ENCODE measurements at regions of chr6 and their contacts with region 1.

Region 1: DNA sequence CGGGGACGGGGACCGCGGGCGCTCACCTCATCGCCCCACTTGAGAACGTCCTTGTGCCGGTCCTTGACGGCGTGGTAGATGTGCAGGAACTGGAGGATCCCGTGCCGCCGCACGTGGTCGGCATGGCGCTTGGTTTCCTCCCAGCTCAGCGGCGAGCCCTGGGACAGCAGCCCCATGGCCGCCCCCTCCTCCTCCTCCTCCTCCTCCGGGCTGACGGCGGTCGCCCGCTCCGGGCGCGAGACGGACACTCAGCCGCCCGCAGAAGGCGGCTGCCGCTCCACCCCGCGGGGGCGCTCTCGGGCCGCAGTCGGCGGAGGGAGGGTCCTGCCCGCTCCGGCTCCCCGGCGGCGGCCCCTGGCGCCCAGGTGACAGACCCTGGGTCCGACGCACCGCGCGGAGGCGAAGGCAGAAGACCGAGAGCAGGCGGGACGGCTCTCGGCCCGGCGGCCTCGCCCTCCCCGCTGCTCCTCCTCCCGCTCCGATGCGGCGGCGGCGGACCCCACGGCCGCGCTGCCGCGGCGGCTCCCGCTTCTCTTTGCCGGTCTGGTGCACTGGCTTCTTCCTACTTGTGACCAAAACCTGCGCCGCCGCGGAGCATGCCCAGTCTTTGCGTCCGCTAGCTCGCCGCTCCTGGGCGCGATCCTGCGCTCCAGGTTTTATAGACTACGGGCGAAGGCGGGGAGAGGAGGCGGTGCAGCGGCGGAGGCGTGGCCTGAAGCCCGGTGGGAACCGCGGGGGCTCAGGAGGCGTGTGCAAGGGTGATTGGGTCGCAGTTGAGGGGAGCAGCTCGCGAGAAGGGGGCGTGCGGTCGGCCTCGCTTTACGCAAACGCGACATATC is at the start of gene GCLC:
- DNase-seq: peak; percentile 94
- ATAC-seq: peak; percentile 68
- H3K4me3 Mint-ChIP-seq: peak within 1 kb of the TSS; percentile 96
- H3K27ac Mint-ChIP-seq: peak within 1 kb of the TSS; percentile 94
- H3K4me1 Mint-ChIP-seq: peaks cover 58% of the 10 kb centered on the region
- H3K27me3 Mint-ChIP-seq: peaks cover 6% of the 10 kb centered on the region
- total RNA-seq, gene GCLC: 18.2 to 23.5 TPM

Region 2: DNA sequence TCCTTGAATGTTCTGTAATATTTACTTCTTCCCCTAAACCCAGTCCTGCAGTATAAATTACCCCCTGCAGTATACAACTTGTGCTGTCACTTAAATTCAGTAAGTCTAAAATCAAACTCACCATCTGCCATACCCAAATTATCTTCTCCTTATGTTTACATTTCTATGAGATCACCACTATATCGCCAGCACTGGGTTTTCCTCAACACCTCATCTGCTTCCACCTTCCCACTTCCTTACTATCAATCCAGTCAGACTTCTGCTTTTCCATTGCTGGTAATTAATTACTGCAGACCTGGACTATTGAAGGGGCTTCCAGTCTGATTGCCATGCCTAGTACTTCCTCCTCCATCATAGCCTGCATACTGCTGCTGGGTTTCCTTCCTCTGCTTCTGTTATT is 1109.3 kb before region 1 on chr6:
- CTCF ChIA-PET with region 1: no interaction called
- POLR2A ChIA-PET with region 1: no interaction called
- intact Hi-C with region 1: no loop called
- DNase-seq: no peak
- ATAC-seq: no peak
- H3K4me3 Mint-ChIP-seq: no peak overlapping the region
- H3K27ac Mint-ChIP-seq: no peak overlapping the region
- H3K4me1 Mint-ChIP-seq: peaks cover 4% of the 10 kb centered on the region
- H3K27me3 Mint-ChIP-seq: no peaks in the 10 kb centered on the region

Region 3: GRCh38 chr6:52577022-52577777 is 967.5 kb before region 1 on chr6 and contains the start of gene TRAM2:
- CTCF ChIA-PET with region 1: no interaction called
- POLR2A ChIA-PET with region 1: no interaction called
- intact Hi-C with region 1: loop called in 1 of 2 experiments (anchors 10 kb)
- DNase-seq: peak; percentile 78
- ATAC-seq: peak; percentile 56
- H3K4me3 Mint-ChIP-seq: peak within 1 kb of the TSS; percentile 79
- H3K27ac Mint-ChIP-seq: peak within 1 kb of the TSS; percentile 80
- H3K4me1 Mint-ChIP-seq: peaks cover 43% of the 10 kb centered on the region
- H3K27me3 Mint-ChIP-seq: peaks cover 2% of the 10 kb centered on the region
- total RNA-seq, gene TRAM2: 3.5 to 3.6 TPM

Region 4: GRCh38 chr6:53064726-53065215 is 479.9 kb before region 1 on chr6:
- CTCF ChIA-PET with region 1: no interaction called
- POLR2A ChIA-PET with region 1: no interaction called
- intact Hi-C with region 1: loop called (anchors 2 kb)
- DNase-seq: peak; percentile 98
- ATAC-seq: peak; percentile 84
- H3K4me3 Mint-ChIP-seq: peak overlapping the region; percentile 97
- H3K27ac Mint-ChIP-seq: peak overlapping the region; percentile 100
- H3K4me1 Mint-ChIP-seq: peaks cover 55% of the 10 kb centered on the region
- H3K27me3 Mint-ChIP-seq: no peaks in the 10 kb centered on the region

Region 5: GRCh38 chr6:53095716-53096115 is 449.0 kb before region 1 on chr6:
- CTCF ChIA-PET with region 1: no interaction called
- POLR2A ChIA-PET with region 1: no interaction called
- intact Hi-C with region 1: no loop called
- DNase-seq: no peak
- ATAC-seq: no peak
- H3K4me3 Mint-ChIP-seq: no peak overlapping the region
- H3K27ac Mint-ChIP-seq: no peak overlapping the region
- H3K4me1 Mint-ChIP-seq: no peaks in the 10 kb centered on the region
- H3K27me3 Mint-ChIP-seq: no peaks in the 10 kb centered on the region

Region 6: GRCh38 chr6:53348371-53349208 is 196.1 kb before region 1 on chr6 and contains the start of gene ELOVL5:
- CTCF ChIA-PET with region 1: no interaction called
- POLR2A ChIA-PET with region 1: interaction called, 3 read pairs
- intact Hi-C with region 1: loop called (anchors 5 to 10 kb)
- DNase-seq: peak; percentile 99
- ATAC-seq: peak; percentile 79
- H3K4me3 Mint-ChIP-seq: peak within 1 kb of the TSS; percentile 93
- H3K27ac Mint-ChIP-seq: peak within 1 kb of the TSS; percentile 91
- H3K4me1 Mint-ChIP-seq: peaks cover 46% of the 10 kb centered on the region
- H3K27me3 Mint-ChIP-seq: no peaks in the 10 kb centered on the region
- total RNA-seq, gene ELOVL5: 98.1 to 106 TPM

Region 7: DNA sequence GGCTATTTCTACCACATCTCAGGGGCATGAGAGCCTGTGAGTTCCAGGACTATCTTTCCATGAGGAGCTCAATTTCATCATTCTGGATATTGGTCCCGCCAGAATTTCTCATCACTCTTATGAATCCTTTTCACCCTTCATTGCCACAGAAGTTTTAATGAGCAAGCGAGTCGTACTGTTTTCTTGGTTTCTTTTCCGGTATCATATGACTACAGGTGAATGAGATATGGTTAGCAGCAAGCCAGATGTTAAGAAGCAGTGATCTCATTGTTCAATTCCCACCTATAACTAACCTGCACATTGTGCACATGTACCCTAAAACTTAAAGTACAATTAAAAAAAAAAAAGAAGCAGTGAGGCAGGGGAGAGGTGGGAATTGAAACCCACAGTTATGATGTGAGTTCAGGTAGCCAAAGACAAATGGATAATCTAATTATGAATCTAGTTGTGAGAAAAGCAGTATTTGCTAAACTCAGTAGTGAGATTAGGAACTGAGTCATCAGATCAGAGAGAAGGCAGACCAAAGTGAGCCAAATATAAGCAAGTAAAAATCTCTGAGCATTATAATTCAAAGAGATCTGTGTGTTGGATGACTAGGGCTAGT is 117.9 kb before region 1 on chr6:
- CTCF ChIA-PET with region 1: no interaction called
- POLR2A ChIA-PET with region 1: no interaction called
- intact Hi-C with region 1: loop called in 1 of 2 experiments (anchors 5 kb)
- DNase-seq: no peak
- ATAC-seq: peak; percentile 96
- H3K4me3 Mint-ChIP-seq: no peak overlapping the region
- H3K27ac Mint-ChIP-seq: peak overlapping the region; percentile 26
- H3K4me1 Mint-ChIP-seq: peaks cover 23% of the 10 kb centered on the region
- H3K27me3 Mint-ChIP-seq: peaks cover 11% of the 10 kb centered on the region

Region 8: GRCh38 chr6:53439556-53439955 is 105.1 kb before region 1 on chr6:
- CTCF ChIA-PET with region 1: no interaction called
- POLR2A ChIA-PET with region 1: no interaction called
- intact Hi-C with region 1: no loop called
- DNase-seq: no peak
- ATAC-seq: no peak
- H3K4me3 Mint-ChIP-seq: no peak overlapping the region
- H3K27ac Mint-ChIP-seq: no peak overlapping the region
- H3K4me1 Mint-ChIP-seq: peaks cover 22% of the 10 kb centered on the region
- H3K27me3 Mint-ChIP-seq: peaks cover 5% of the 10 kb centered on the region

Region 9: GRCh38 chr6:53579338-53579737 is 34.6 kb after region 1 on chr6:
- CTCF ChIA-PET with region 1: interaction called, 7 read pairs
- POLR2A ChIA-PET with region 1: interaction called, 13 read pairs
- intact Hi-C with region 1: loop called in 1 of 2 experiments (anchors 2 kb)
- DNase-seq: peak; percentile 76
- ATAC-seq: peak; percentile 95
- H3K4me3 Mint-ChIP-seq: no peak overlapping the region
- H3K27ac Mint-ChIP-seq: peak overlapping the region; percentile 27
- H3K4me1 Mint-ChIP-seq: peaks cover 38% of the 10 kb centered on the region
- H3K27me3 Mint-ChIP-seq: no peaks in the 10 kb centered on the region

Region 10: GRCh38 chr6:53725791-53726431 is 181.2 kb after region 1 on chr6:
- CTCF ChIA-PET with region 1: interaction called, 4 read pairs
- POLR2A ChIA-PET with region 1: no interaction called
- intact Hi-C with region 1: loop called (anchors 1 to 2 kb)
- DNase-seq: peak; percentile 86
- ATAC-seq: peak; percentile 91
- H3K4me3 Mint-ChIP-seq: no peak overlapping the region
- H3K27ac Mint-ChIP-seq: no peak overlapping the region
- H3K4me1 Mint-ChIP-seq: peaks cover 5% of the 10 kb centered on the region
- H3K27me3 Mint-ChIP-seq: peaks cover 12% of the 10 kb centered on the region

Measured in activated CD4-positive, alpha-beta T cell treated with anti-CD3 and anti-CD28 coated beads for 36 hours (primary cell).